Sigmoid colon (tissue), 7 donors: ENCODE measurements at regions of chr1 and their contacts with region 1.

Region 1: DNA sequence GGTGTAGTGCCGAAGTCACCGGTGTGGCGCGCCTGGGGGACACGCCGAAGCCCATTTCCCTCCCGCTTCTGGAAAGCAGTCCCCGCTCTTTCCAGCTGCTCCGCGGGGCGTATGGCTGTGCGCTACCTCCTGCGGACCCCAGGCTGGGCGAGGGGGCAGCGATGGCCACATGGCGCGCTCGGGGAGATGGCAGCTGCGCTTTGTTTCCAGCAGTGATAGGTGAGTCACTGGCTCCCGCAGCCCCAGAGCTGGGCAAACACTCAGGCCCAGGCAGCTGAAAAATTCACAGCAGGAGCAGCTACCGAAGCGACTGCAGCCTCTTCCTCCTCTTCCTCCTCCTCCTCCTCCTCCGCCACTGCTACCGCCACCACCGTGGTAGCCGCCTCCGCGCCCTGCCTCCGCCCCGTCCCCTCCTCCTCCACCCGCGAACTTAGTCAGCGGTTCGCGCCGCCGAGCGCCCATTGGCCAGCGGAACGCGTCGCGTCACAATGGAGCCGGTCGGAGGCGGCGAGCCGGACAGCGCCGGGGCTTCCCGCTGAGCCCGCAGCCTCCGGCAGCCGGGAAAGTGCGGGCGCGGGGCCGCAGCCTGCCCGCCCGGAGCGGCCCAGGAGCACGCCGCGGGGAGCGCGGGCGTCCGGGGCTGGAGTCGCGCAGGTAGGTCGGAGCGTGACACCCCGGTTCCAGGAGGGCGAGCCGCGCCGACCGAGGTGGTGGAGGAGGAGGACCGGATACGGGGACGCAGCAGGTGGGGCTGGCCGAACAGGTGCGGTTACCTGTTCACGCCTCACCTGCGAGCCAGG is at the start of gene LRRC8B:
- DNase-seq: peak; percentile 92
- H3K4me3 ChIP-seq: peak within 1 kb of the TSS; percentile 56 to 99 (median 84)
- H3K27ac ChIP-seq: peak within 1 kb of the TSS; percentile 81 to 87 (median 84)
- H3K4me1 ChIP-seq: peaks cover 0 to 18% (median 3%) of the 10 kb centered on the region in 4 donors
- H3K27me3 ChIP-seq: no peaks in the 10 kb centered on the region
- CTCF ChIP-seq: peak in 1 of 4 experiments; percentile 8
- EP300 ChIP-seq: no peak
- POLR2A ChIP-seq: peak in 1 of 2 donors; percentile 42
- total RNA-seq, gene LRRC8B: 3.0 to 9.8 (median 6.1) TPM

Region 2: GRCh38 chr1:89298461-89298860 is 226.1 kb before region 1 on chr1:
- intact Hi-C with region 1: no loop called
- DNase-seq: no peak
- H3K4me3 ChIP-seq: no peak overlapping the region
- H3K27ac ChIP-seq: no peak overlapping the region
- H3K4me1 ChIP-seq: no peaks in the 10 kb centered on the region
- H3K27me3 ChIP-seq: no peaks in the 10 kb centered on the region
- CTCF ChIP-seq: no peak
- EP300 ChIP-seq: no peak
- POLR2A ChIP-seq: no peak

Region 3: DNA sequence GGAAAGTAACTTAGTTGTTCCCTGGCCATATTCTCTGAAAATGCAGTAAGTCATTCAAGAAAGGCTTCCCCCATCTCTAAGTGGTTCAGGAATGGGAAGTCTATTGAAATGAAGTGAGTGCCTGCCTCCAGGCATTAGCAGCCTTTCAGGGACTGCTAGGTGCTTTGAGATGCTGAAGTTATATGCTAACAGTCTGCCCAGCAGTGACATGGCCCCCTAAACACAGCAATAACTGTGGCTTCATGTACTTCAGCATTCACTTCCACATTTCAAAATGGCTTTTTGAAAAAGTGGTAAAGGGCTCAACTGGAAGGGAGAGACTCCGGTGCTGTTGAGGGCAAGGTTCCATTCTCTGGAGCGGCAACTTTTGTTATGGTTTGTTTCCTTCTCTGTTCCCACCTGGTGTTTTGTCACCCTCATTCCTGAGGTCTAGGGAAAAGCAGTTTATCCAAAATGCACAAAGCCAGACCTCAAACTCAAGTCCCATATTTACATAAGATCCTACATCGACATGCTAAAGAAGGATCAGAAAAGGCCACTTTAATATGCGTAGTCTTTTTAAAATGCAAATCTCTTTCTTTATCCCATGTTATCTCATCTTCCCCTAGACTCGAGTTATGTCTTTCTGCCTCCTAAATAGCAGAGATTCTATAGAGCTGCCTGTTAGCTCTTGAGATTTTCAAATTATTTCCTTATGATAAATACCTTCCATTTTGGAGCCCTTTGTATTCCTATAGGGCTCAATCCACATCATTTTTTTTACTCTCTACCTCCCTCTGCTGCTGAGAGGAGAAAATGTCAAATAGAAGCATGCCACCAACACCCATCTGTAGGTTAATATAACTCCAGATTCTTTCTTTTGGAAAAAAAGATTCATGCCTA is 74.1 kb after region 1 on chr1:
- intact Hi-C with region 1: loop called (anchors 5 kb)
- DNase-seq: no peak
- H3K4me3 ChIP-seq: no peak overlapping the region
- H3K27ac ChIP-seq: no peak overlapping the region
- H3K4me1 ChIP-seq: no peaks in the 10 kb centered on the region
- H3K27me3 ChIP-seq: no peaks in the 10 kb centered on the region
- CTCF ChIP-seq: peak; percentile 9 to 61 (median 40)
- EP300 ChIP-seq: no peak
- POLR2A ChIP-seq: no peak